Activated CD8-positive, alpha-beta memory T cell treated with anti-CD3 and anti-CD28 coated beads, Interleukin-2, amount 10 ng/mL, durations not matched to agents 7 days and 5 days (primary cell): ENCODE measurements at regions of chr1 and their contacts with region 1.

Region 1: GRCh38 chr1:111755331-111756123 is at the start of gene DDX20:
- DNase-seq: peak; percentile 95
- ATAC-seq: peak; percentile 91
- H3K4me3 Mint-ChIP-seq: peak within 1 kb of the TSS; percentile 90
- H3K27ac Mint-ChIP-seq: peak within 1 kb of the TSS; percentile 95
- H3K4me1 Mint-ChIP-seq: peaks cover 43% of the 10 kb centered on the region
- H3K27me3 Mint-ChIP-seq: no peaks in the 10 kb centered on the region
- total RNA-seq, gene DDX20: 14.1 to 17.9 TPM

Region 2: DNA sequence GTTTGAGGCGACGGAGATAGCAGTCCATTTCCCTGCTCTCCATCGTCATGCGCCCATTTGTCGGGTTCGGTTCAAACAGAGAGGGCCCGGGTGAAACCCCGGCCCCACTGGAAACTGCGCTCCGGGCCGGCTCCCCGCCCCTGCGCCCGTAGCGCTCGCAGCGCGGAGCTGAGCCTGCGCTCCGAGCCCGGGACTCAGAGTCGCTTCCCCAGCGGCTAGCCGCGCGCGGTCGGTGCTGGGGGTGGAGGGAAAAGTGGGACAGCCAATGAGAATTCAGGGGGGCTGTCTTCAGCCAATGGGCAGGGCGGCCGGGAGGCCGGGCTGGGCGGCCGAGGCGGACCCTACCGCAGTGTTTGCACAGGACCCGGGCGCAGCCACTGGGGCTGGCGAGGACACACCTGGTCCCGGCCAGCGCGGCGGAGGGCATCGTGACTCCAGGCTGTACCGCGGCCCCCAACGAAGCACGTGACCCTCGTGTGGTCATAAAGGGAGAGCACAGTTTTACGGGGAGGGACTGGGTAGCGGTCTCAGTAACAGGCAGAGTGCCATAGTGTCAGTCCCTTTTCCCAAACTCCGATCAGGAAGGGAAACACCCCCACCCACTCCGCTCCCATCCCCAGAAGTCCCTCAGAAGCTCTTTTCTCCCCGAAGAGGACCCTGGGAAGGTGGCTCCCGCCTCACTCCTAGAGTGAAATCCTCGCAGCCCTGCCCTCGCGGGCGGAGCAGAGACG is 16.2 kb before region 1 on chr1 and contains the start of gene INKA2:
- CTCF ChIA-PET with region 1: interaction called, 30 read pairs
- DNase-seq: peak; percentile 92
- ATAC-seq: peak; percentile 86
- H3K4me3 Mint-ChIP-seq: peak within 1 kb of the TSS; percentile 82
- H3K27ac Mint-ChIP-seq: peak within 1 kb of the TSS; percentile 70
- H3K4me1 Mint-ChIP-seq: peaks cover 19% of the 10 kb centered on the region
- H3K27me3 Mint-ChIP-seq: peaks cover 45% of the 10 kb centered on the region
- total RNA-seq, gene INKA2: 1.7 to 1.9 TPM

Region 3: DNA sequence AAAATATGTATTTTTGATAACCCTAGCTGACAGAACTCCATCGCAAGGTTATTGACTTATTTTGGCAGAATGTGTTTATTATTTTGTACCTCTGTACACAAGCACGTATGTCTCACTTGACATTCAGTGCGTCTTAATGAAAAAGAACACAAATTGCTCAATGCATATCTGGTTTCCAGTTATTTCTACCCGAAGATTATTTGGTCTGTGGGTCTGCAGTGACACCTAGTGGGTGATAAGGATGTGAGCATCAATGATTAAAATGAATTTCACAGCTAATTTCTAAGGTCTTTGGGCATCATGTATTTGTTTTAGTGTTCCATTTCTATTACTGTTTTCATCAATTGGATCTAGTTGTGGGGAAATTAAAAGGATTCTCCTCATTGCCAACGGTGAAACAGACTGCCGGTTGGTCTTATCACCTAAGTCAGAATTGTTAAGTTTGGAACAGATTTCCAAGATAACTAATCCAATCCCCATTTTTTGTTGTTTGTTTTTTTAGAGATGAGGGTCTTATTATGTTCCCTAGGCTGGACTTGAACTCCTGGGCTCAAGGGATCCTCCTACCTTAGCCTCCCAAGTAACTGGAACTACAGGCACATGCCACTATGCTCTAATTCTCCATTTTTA is 14.1 kb after region 1 on chr1:
- CTCF ChIA-PET with region 1: interaction called, 12 read pairs
- DNase-seq: peak; percentile 64
- ATAC-seq: peak; percentile 58
- H3K4me3 Mint-ChIP-seq: no peak overlapping the region
- H3K27ac Mint-ChIP-seq: no peak overlapping the region
- H3K4me1 Mint-ChIP-seq: peaks cover 5% of the 10 kb centered on the region
- H3K27me3 Mint-ChIP-seq: no peaks in the 10 kb centered on the region

Region 4: GRCh38 chr1:111904478-111905218 is 149.1 kb after region 1 on chr1:
- CTCF ChIA-PET with region 1: no interaction called
- DNase-seq: peak; percentile 51
- ATAC-seq: peak; percentile 83
- H3K4me3 Mint-ChIP-seq: no peak overlapping the region
- H3K27ac Mint-ChIP-seq: no peak overlapping the region
- H3K4me1 Mint-ChIP-seq: peaks cover 22% of the 10 kb centered on the region
- H3K27me3 Mint-ChIP-seq: peaks cover 21% of the 10 kb centered on the region